ENCODE measurements at regions of chr14 and their contacts with region 1.

Region 1: GRCh38 chr14:100108042-100108825 is 43.0 kb downstream of the EVL start:
- DNase-seq: peak; percentile 97
- ATAC-seq: peak; percentile 96
- H3K4me3 Mint-ChIP-seq: no peak overlapping the region
- H3K27ac Mint-ChIP-seq: peak overlapping the region; percentile 67; the same call in 1 of the 2 replicates
- H3K4me1 Mint-ChIP-seq: peaks cover 11% of the 10 kb centered on the region
- H3K27me3 Mint-ChIP-seq: no peaks in the 10 kb centered on the region
- CTCF ChIP-seq: peak; percentile 90

Region 2: DNA sequence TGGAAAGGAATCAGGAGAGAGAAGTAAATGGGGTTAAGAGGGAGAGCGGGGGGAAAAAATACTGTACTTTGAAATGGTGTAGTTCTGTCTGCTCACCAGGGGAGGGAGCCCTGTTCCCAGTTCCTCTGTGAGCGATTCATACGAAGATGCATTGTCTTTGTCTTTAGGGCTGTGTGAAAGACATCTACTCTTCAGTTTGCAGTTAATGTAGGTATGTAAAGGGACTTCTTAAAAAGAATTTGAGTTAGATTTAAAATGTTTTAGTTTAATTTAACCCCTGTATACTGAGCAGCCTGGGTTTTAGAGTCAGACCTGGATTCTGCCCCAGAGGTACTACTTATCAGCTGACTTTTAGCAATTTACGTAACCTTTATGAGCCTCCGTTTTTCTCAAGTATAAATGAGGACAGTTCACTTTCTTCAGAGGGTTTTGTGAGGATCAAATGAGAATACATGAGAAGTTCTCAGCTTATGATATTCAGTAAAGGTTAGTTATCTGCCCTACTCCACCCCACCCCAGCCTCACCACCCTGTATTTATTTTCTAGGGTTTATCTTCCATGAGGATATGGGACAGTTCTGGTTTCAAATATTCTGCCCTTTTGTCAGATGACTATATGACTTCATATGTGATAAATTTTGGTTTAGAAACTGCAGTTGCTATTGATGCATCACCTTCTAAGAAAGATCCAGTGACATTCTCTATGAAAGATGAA is 125.5 kb before region 1 on chr14:
- CTCF ChIA-PET with region 1: interaction called, 11 read pairs
- POLR2A ChIA-PET with region 1: no interaction called
- DNase-seq: peak; percentile 52
- ATAC-seq: peak; percentile 89
- H3K4me3 Mint-ChIP-seq: no peak overlapping the region
- H3K27ac Mint-ChIP-seq: no peak overlapping the region
- H3K4me1 Mint-ChIP-seq: peaks cover 7% of the 10 kb centered on the region; the same call in 1 of the 2 replicates
- H3K27me3 Mint-ChIP-seq: no peaks in the 10 kb centered on the region
- CTCF ChIP-seq: peak; percentile 53; the same call in 1 of the 2 replicates

Region 3: GRCh38 chr14:100047600-100047999 is 60.6 kb before region 1 on chr14:
- CTCF ChIA-PET with region 1: no interaction called
- POLR2A ChIA-PET with region 1: no interaction called
- DNase-seq: no peak
- ATAC-seq: no peak
- H3K4me3 Mint-ChIP-seq: no peak overlapping the region
- H3K27ac Mint-ChIP-seq: no peak overlapping the region
- H3K4me1 Mint-ChIP-seq: no peaks in the 10 kb centered on the region
- H3K27me3 Mint-ChIP-seq: no peaks in the 10 kb centered on the region
- CTCF ChIP-seq: no peak

Region 4: DNA sequence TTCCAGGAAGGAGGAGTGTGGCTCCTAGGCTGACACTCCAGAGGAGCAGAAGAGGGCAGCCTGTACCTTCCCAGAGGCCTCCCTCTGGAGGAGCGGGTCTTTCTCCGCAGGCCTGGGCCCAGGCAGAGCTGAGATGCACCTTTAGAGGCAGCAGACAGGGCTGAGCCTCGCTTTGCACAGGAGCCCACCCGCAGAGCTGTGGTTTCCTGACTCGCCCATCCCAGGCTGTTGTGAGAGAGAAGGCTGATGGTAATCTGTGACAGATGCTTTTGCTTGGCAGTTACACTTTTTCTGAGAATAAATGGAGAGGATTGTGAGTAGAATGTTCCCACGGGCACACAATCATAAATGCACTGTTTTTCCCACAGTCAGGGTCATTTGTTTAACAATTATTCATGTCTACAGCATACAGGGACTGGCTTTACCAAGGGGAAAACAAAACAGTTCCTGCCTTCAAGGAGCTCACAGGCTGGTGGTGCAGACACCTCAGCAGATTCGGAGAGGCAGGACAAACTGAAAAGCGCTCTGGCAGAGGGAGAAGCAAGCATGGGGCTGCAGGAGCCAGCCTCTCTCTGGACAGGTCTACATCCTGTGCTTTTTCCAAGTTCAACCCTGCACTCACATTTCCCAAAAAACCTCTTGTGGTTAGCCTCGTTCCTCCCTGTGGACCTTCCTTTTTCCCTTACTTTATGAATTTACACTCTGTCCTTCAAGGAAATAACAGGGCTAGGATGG is 29.1 kb before region 1 on chr14:
- CTCF ChIA-PET with region 1: interaction called, 33 read pairs
- POLR2A ChIA-PET with region 1: no interaction called
- DNase-seq: peak; percentile 56
- ATAC-seq: peak; percentile 83
- H3K4me3 Mint-ChIP-seq: no peak overlapping the region
- H3K27ac Mint-ChIP-seq: peak overlapping the region; percentile 80
- H3K4me1 Mint-ChIP-seq: peaks cover 29% of the 10 kb centered on the region
- H3K27me3 Mint-ChIP-seq: no peaks in the 10 kb centered on the region
- CTCF ChIP-seq: no peak

Region 5: DNA sequence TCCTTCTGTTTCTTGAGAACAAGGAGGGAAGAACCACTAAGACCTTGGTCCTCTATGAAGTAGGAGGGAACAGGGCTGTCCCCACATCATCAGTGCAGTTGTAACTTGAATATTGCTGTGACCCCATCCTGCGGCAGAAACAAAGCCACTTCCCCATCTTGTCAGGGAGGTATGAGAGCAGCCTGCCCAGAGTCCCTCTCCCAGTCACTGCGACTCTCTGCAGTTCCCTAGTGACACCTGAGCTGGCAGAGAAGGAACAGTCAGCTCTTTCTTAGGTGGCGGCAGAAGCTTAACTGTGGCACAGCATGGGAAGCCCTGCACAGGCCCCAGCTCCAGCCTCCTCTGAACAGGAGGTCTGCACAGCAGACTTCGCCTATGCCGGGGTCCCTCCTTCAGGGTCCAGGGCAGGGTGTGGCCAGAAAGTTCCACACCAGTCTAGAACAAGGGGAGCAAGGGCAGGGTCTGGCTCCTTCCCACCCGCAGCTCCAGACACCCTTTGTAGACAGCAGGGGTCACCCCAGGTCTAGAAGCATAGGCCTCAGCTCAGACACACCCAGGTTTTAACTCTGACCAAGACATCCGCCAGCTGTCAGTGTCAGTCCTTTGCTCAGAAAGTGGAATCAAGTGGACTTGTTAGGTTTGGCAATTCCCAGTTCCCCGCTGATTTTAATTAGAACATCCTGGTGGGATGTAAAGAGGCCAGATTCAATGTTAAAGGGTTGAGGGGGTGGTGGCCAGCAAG is 14.4 kb after region 1 on chr14:
- CTCF ChIA-PET with region 1: interaction called, 23 read pairs
- POLR2A ChIA-PET with region 1: no interaction called
- DNase-seq: no peak
- ATAC-seq: no peak
- H3K4me3 Mint-ChIP-seq: no peak overlapping the region
- H3K27ac Mint-ChIP-seq: peak overlapping the region; percentile 9; the same call in 1 of the 2 replicates
- H3K4me1 Mint-ChIP-seq: no peaks in the 10 kb centered on the region
- H3K27me3 Mint-ChIP-seq: no peaks in the 10 kb centered on the region
- CTCF ChIP-seq: no peak

Region 6: DNA sequence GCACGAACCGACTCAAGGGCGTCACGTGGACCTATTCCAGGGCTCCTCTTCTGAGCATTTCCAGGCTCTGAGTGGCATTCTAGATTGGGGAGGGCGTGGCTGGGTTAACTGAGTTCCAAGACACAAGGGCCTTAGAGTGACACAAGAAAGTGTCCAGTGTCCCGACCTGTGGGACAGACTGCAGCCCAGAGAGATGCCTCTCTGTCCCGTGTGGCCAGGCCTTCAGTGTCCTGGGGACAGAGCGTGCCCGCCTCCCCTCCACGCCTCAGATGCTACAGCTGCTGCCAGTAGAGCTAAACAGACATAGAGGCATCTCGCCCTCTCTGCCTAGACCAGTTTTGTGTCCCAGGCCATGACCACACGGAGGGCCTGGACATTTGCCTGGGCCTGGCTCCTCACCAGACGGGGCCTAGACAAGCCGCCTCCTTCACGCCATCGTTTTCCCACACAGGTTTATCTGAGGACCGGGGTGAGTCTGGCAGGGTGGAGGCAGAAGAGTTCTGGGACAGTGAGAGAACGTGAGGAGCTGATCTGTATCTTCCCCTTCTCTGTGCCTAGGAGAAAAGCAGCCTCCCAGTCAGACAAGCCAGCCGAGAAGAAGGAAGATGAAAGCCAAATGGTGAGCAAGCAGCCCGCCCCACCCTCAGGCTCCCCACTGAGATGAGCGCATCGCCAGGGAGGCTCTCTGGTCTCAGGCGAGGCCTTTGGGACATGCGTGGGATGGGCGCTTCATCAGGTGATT is 24.1 kb after region 1 on chr14:
- CTCF ChIA-PET with region 1: interaction called, 17 read pairs
- POLR2A ChIA-PET with region 1: no interaction called
- DNase-seq: no peak
- ATAC-seq: no peak
- H3K4me3 Mint-ChIP-seq: no peak overlapping the region
- H3K27ac Mint-ChIP-seq: 0 out of 2 replicates have a peak overlapping the region, but pooled peaks have one; percentile 41
- H3K4me1 Mint-ChIP-seq: peaks cover 12% of the 10 kb centered on the region
- H3K27me3 Mint-ChIP-seq: no peaks in the 10 kb centered on the region
- CTCF ChIP-seq: no peak

Region 7: GRCh38 chr14:100285021-100285912 is 177.0 kb after region 1 on chr14:
- CTCF ChIA-PET with region 1: no interaction called
- POLR2A ChIA-PET with region 1: no interaction called
- DNase-seq: peak; percentile 80
- ATAC-seq: peak; percentile 69
- H3K4me3 Mint-ChIP-seq: peak overlapping the region; percentile 64
- H3K27ac Mint-ChIP-seq: no peak overlapping the region; the same call in 1 of the 2 replicates
- H3K4me1 Mint-ChIP-seq: peaks cover 47% of the 10 kb centered on the region
- H3K27me3 Mint-ChIP-seq: no peaks in the 10 kb centered on the region
- CTCF ChIP-seq: peak; percentile 82

Region 8: DNA sequence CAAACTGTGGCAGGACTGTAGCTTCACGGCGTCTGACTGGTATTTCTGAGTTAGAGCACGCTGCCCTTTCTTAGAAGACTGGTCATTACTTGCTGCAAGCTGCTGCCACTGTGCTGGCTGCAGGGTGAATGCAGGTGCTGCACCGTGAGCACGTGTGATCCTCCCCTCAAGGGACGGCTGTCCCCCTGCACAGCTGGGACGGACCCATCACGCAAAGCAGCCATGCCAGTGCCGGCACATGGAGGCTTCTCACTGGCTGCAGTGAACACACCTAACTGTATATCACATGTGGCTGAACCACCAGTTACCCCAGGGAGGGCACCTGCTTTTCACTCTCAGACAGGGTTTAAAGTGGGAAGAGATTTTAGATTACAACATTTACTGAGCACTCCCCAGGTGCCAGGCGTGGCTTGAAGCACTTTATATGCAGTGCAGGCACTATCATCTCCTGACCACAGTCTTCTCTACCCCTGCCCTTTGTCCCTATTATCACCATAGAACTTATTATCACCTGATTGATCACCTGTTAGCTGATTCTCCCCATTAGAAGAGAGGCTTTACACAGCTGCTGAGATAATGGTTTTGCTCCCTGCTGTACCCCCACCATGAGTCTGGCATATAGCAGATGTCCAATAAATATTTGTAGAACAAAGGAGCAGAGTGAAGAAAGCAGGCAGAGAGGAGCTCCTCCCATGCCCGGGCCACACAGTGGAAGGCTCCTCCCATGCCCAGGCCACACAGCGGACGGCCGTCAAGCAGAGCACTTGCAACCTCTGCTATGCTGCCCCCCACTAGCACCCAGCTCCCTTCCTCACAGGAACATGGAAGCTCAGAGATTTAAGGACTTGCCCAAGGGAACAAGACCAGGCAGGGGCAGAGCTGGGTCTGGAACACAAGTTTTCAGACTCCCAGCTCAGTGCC is 240.8 kb after region 1 on chr14:
- CTCF ChIA-PET with region 1: no interaction called
- POLR2A ChIA-PET with region 1: no interaction called
- DNase-seq: no peak
- ATAC-seq: no peak
- H3K4me3 Mint-ChIP-seq: no peak overlapping the region
- H3K27ac Mint-ChIP-seq: no peak overlapping the region; the same call in 1 of the 2 replicates
- H3K4me1 Mint-ChIP-seq: no peaks in the 10 kb centered on the region
- H3K27me3 Mint-ChIP-seq: no peaks in the 10 kb centered on the region
- CTCF ChIP-seq: no peak